ENCODE measurements at regions of chr1 and their contacts with region 1.

Region 1: DNA sequence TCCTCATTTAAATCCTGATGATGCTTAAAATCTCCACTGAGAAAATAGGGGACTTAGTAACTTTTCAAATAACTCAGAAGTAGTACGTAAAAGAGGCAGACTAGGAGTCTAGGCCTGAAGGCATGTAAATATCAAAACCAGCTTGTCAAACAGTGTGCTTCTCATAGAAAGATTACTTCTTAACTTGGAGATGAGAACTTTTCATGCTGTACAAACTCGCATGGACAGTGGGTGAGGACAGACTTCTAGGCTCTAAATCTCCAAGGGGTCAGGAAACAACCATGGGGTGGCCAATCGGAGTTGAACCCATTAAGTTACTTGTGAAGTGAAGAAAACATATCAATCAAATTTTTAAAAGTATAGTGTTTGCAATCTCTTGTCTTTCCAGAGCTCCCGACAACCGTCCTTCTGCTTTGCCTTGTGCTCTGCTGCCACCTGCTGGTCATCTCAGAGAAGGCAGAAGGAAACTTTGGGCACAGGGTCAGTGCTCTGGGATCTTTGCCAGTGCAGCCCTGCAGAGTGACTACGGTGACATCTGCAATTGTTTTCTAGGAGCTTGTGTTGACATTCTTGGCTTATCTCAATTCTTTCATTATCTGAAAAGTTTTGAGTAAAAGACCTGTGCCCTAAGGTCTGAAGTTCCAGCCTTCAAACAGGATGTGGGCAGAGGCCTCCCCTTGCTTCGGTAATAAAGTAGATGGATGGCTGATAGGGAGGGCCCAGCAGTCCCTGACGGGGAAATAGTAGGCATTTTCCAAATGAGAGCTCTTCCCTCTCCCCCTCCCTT is 105.1 kb upstream of the PDE4B start:
- DNase-seq: peak; percentile 79
- ATAC-seq: peak; percentile 92
- H3K4me3 Mint-ChIP-seq: no peak overlapping the region
- H3K27ac Mint-ChIP-seq: no peak overlapping the region
- H3K4me1 Mint-ChIP-seq: peaks cover 11% of the 10 kb centered on the region
- H3K27me3 Mint-ChIP-seq: peaks cover 12% of the 10 kb centered on the region

Region 2: DNA sequence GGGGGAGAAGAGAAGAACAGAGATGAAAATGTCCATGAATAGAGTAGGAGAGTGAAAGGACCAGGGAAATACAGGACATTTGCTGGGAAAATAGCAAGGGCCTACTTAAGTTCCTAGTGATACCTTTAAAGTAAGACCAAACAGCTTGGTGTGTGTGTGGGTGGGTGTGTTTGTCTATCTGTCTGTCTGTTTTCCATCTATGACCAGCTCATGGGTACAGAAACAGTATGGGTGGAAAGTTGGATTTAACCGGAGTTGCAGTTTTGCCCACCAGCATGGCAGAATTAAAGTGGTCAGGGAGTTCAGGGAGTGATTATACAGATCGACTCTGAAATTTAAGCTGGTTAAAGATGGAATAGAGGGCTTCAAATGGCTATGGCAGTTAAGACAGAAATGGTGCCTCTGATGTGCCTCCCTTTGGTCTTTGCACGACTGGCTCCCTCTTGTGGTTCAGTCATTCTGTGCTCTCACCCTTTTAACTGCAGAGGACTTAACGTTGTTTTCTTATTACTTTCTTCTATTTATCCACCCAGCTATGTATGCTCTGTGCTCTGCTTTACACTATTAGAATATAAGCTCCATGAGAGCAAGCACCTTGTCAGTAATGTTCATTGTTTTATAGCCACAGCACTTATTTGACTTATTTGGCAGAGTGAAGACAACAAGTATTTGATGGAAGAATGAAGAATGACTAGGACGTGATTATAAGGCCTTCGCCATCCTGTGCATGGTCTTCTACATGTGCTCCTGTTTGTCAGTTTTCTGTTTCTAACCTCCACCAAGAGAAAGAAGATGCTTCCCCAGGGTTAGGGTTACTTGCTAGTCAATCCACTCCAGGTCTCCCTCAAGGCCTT is 612.3 kb before region 1 on chr1:
- CTCF ChIA-PET with region 1: interaction called, 10 read pairs
- POLR2A ChIA-PET with region 1: no interaction called
- DNase-seq: peak; percentile 80
- ATAC-seq: peak; percentile 97
- H3K4me3 Mint-ChIP-seq: no peak overlapping the region
- H3K27ac Mint-ChIP-seq: no peak overlapping the region
- H3K4me1 Mint-ChIP-seq: peaks cover 3% of the 10 kb centered on the region
- H3K27me3 Mint-ChIP-seq: peaks cover 7% of the 10 kb centered on the region

Region 3: GRCh38 chr1:65214340-65215027 is 473.1 kb before region 1 on chr1:
- CTCF ChIA-PET with region 1: interaction called, 15 read pairs
- POLR2A ChIA-PET with region 1: no interaction called
- DNase-seq: no peak
- ATAC-seq: no peak
- H3K4me3 Mint-ChIP-seq: no peak overlapping the region
- H3K27ac Mint-ChIP-seq: no peak overlapping the region
- H3K4me1 Mint-ChIP-seq: peaks cover 15% of the 10 kb centered on the region
- H3K27me3 Mint-ChIP-seq: no peaks in the 10 kb centered on the region

Region 4: GRCh38 chr1:65235867-65236805 is 451.5 kb before region 1 on chr1:
- CTCF ChIA-PET with region 1: interaction called, 47 read pairs
- POLR2A ChIA-PET with region 1: no interaction called
- DNase-seq: no peak
- ATAC-seq: no peak
- H3K4me3 Mint-ChIP-seq: no peak overlapping the region
- H3K27ac Mint-ChIP-seq: no peak overlapping the region
- H3K4me1 Mint-ChIP-seq: peaks cover 5% of the 10 kb centered on the region
- H3K27me3 Mint-ChIP-seq: peaks cover 16% of the 10 kb centered on the region

Region 5: DNA sequence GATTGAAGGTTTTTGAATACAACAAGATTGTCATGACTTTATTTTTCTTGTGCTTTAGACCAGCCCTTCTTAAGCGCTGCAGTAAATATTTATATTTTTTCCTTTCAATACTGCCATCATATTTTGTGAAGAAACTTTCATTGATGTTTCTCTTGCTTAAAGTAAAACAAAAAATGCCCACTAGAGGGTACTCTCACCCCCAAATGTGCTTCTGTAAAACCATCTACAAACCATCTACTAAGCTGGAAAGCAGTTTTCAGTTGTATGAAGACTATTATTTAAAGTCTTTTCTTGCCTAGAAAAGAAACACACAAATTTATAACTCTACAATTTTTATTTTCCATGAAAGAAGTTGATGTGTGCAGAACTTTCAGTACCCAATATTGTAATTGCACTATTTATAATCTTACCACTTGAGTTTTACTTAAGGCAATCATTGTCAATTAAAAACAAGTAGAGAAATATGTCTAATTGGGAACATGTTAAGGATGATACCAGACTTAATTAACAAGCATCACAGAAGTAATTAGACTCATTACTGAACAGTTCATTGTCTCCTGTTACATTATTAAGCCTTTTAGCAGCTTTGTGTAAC is 256.4 kb before region 1 on chr1:
- CTCF ChIA-PET with region 1: interaction called, 46 read pairs
- POLR2A ChIA-PET with region 1: no interaction called
- DNase-seq: no peak
- ATAC-seq: peak; percentile 49
- H3K4me3 Mint-ChIP-seq: no peak overlapping the region
- H3K27ac Mint-ChIP-seq: no peak overlapping the region
- H3K4me1 Mint-ChIP-seq: peaks cover 9% of the 10 kb centered on the region
- H3K27me3 Mint-ChIP-seq: no peaks in the 10 kb centered on the region

Region 6: GRCh38 chr1:65630855-65631254 is 56.8 kb before region 1 on chr1:
- CTCF ChIA-PET with region 1: no interaction called
- POLR2A ChIA-PET with region 1: no interaction called
- DNase-seq: no peak
- ATAC-seq: no peak
- H3K4me3 Mint-ChIP-seq: no peak overlapping the region
- H3K27ac Mint-ChIP-seq: no peak overlapping the region
- H3K4me1 Mint-ChIP-seq: no peaks in the 10 kb centered on the region
- H3K27me3 Mint-ChIP-seq: no peaks in the 10 kb centered on the region